ENCODE measurements at regions of chr2 and their contacts with region 1.

Region 1: DNA sequence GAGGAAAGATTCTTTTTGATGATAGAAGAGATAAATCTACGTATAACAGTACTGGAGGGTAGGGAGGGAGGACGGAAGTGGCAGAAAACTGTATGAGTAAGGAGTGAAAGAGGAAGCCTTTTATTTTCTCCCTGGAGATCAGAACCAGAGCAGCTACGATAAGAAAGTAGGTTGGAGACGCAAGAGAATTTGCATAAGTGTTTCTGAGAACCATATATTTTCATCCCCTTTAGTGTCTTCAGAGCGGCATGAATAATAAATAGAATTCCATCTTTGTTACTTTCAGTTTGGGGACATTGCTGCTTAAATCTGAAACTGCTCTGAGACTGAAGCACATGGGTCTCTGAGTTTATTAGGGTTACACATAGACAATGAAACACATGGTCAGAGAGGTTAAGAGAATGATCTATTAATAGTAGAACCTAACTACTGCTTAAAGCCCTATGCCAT is 230.2 kb upstream of the TNP1 start:
- DNase-seq: peak; percentile 42 to 72 (median 58)
- ATAC-seq: peak; percentile 72
- H3K4me3 ChIP-seq: no peak overlapping the region
- H3K27ac ChIP-seq: peak overlapping the region; percentile 77
- H3K4me1 ChIP-seq: peaks cover 15 to 52% of the 10 kb centered on the region in 2 experiments
- H3K27me3 ChIP-seq: no peaks in the 10 kb centered on the region
- CTCF ChIP-seq: no peak
- EP300 ChIP-seq: peak; percentile 73; the same call in 1 of the 2 replicates
- POLR2A ChIP-seq: no peak
- RAD21 ChIP-seq: 0 out of 4 replicates have a peak, but pooled peaks of 1 of the 2 experiments have one; percentile 6

Region 2: GRCh38 chr2:217077831-217078407 is 12.1 kb before region 1 on chr2:
- CTCF ChIA-PET with region 1: no interaction called
- POLR2A ChIA-PET with region 1: interaction called, 6 read pairs
- in situ Hi-C with region 1: no loop called
- intact Hi-C with region 1: loop called (anchors 1 kb)
- DNase-seq: peak; percentile 23 to 79 (median 50)
- ATAC-seq: peak; percentile 76
- H3K4me3 ChIP-seq: no peak overlapping the region
- H3K27ac ChIP-seq: peak overlapping the region; percentile 52; the same call in 1 of the 3 replicates
- H3K4me1 ChIP-seq: peaks cover 14 to 39% of the 10 kb centered on the region in 2 experiments
- H3K27me3 ChIP-seq: no peaks in the 10 kb centered on the region
- CTCF ChIP-seq: no peak
- EP300 ChIP-seq: peak; percentile 83
- POLR2A ChIP-seq: no peak
- RAD21 ChIP-seq: no peak

Region 3: DNA sequence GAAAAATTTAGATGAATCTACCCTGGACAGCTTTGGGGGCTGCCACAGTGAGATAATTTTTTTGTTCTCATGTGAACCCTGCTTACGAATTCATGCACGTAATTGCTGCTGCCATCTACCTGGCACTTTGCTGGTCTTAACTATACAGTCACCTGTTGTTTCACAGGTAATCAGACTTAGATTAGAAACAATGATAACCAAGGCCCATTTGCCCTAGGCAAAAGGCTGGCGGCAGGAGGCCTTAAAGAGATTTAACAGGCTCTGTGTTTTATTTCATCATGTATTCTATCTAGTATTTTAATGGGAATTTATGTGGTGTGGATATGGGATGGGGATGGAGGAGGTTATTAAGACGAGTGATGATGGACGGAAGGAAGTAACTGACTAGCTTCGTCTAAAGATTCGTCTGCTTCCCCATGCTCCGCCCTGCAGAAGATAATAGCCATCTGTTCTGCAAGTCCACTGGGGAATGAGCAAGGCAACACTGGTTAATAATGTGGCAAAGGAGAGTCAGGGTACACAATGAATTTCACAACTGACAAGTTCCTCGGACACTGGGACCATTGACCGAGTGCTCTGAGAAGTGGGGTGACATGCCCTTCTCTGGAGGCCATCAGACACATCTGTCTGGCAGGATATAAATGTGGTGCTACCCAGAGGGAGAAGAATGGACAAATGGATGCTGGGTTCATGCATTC is 61.6 kb after region 1 on chr2:
- CTCF ChIA-PET with region 1: no interaction called
- POLR2A ChIA-PET with region 1: no interaction called
- in situ Hi-C with region 1: no loop called
- intact Hi-C with region 1: loop called (anchors 5 kb)
- DNase-seq: no peak
- ATAC-seq: no peak
- H3K4me3 ChIP-seq: no peak overlapping the region
- H3K27ac ChIP-seq: no peak overlapping the region
- H3K4me1 ChIP-seq: peaks cover 3 to 44% of the 10 kb centered on the region in 2 experiments; a peak in 3 of 5 replicates
- H3K27me3 ChIP-seq: no peaks in the 10 kb centered on the region
- CTCF ChIP-seq: no peak
- EP300 ChIP-seq: no peak
- POLR2A ChIP-seq: no peak
- RAD21 ChIP-seq: no peak